Activated CD4-positive, alpha-beta T cell treated with anti-CD3 and anti-CD28 coated beads, Interleukin-2, amount 10 ng/mL, durations not matched to agents 24 days and 14 days (primary cell): ENCODE measurements at regions of chr16 and their contacts with region 1.

Region 1: DNA sequence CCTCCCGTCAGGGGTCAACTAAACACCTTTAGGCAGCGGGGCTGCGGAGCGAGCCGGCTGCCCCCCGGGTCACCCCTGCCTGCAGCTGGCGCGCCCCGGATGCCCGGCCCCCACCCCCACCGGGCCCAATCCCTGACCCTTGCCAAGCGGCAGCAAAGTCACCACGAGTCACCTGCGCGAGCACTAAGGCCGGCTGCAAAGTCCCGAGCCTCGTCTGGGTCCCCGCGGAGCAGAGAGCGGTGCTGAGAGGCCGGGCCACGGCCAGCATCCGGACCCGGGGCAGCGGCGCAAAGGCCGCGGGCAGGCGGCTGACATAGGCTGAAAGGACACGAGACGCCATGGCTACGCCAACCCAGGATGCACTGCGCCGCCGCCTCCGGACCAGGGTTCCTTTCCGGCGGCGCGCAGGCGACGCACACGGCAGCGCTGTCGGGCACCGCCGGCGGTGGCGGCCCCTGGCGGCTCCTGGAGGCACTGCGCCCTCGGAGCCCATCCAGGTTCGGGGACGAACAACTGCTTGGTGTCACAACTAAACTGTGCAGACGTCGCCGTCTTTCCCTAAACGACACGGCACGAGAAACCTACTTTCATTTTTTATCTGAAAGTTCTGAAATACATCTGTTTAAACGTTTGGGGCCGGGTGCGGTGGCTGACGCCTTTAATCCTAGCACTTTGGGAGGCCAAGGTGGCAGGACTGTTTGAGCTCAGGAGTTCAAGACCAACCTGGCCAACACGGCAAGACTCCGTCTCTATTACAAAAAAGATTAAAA is at the start of gene NDUFAB1:
- DNase-seq: peak; percentile 98
- H3K4me3 Mint-ChIP-seq: peak within 1 kb of the TSS; percentile 88
- H3K27ac Mint-ChIP-seq: peak within 1 kb of the TSS; percentile 83
- H3K4me1 Mint-ChIP-seq: peaks cover 14% of the 10 kb centered on the region
- H3K27me3 Mint-ChIP-seq: no peaks in the 10 kb centered on the region
- total RNA-seq, gene NDUFAB1: 161 and 163 TPM in 2 replicates

Region 2: GRCh38 chr16:23452572-23453337 is 143.4 kb before region 1 on chr16 and contains the start of gene COG7:
- intact Hi-C with region 1: loop called (anchors 5 kb)
- DNase-seq: peak; percentile 96
- H3K4me3 Mint-ChIP-seq: peak within 1 kb of the TSS; percentile 98
- H3K27ac Mint-ChIP-seq: peak within 1 kb of the TSS; percentile 95
- H3K4me1 Mint-ChIP-seq: peaks cover 16% of the 10 kb centered on the region
- H3K27me3 Mint-ChIP-seq: no peaks in the 10 kb centered on the region
- total RNA-seq, gene COG7: 21.6 and 25.6 TPM in 2 replicates

Region 3: GRCh38 chr16:23510164-23510914 is 85.8 kb before region 1 on chr16 and contains the start of gene GGA2:
- intact Hi-C with region 1: loop called (anchors 5 kb)
- DNase-seq: peak; percentile 94
- H3K4me3 Mint-ChIP-seq: peak within 1 kb of the TSS; percentile 91
- H3K27ac Mint-ChIP-seq: peak within 1 kb of the TSS; percentile 95
- H3K4me1 Mint-ChIP-seq: peaks cover 51% of the 10 kb centered on the region
- H3K27me3 Mint-ChIP-seq: no peaks in the 10 kb centered on the region
- total RNA-seq, gene GGA2: 109 and 113 TPM in 2 replicates

Region 4: DNA sequence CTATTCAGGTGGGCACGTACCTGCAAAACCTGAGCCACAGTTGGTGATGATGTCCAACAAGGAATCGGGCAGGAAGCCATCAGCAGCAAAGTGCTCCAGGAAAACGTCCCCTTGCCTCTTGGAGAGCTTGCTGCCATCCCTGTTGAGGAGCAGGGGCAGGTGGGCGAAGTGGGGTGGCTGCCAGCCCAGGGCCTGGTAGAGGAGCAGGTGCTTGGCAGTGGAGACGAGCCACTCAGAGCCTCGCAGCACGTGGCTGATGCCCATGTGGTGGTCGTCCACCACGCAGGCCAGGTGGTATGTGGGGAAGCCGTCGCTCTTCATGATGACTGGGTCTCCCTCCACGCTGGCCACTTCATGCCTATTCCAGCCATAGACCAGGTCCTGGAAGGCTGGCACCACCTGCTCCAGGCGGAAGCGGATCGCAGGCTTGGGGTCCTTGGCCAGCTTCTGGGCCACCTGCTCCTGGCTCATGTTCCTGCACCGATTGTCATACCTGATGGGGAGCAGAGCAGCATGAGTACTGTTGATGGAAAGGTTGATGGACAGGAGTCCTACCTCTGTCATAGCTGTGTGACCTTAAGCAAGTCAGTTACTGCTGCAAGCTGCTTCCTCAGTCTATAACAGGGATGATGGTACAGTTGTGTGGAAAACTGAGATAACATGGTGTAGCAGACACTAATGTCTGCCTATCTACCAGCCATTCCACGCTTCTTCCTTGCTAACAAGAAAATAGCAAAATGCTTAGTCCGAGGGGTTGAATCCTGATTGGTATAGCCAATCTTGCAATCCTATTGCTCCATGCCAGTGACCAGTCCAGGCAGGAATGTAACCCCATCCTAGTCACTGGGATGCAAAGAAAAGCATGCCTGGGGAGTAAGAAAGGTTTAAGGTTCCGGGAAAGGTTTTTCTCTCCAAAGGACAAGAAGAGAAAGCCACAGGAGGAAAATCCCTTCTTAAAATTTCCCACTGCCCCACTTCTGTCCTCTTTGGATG is 61.0 kb before region 1 on chr16:
- intact Hi-C with region 1: no loop called
- DNase-seq: no peak
- H3K4me3 Mint-ChIP-seq: no peak overlapping the region
- H3K27ac Mint-ChIP-seq: no peak overlapping the region
- H3K4me1 Mint-ChIP-seq: no peaks in the 10 kb centered on the region
- H3K27me3 Mint-ChIP-seq: no peaks in the 10 kb centered on the region

Region 5: GRCh38 chr16:23640931-23641765 is 45.0 kb after region 1 on chr16 and contains the starts of genes DCTN5 and PALB2:
- intact Hi-C with region 1: loop called (anchors 1 kb)
- DNase-seq: peak; percentile 97
- H3K4me3 Mint-ChIP-seq: peak within 1 kb of the TSS; percentile 97
- H3K27ac Mint-ChIP-seq: peak within 1 kb of the TSS; percentile 93
- H3K4me1 Mint-ChIP-seq: peaks cover 32% of the 10 kb centered on the region
- H3K27me3 Mint-ChIP-seq: no peaks in the 10 kb centered on the region
- total RNA-seq, gene DCTN5: 98.3 and 99.4 TPM in 2 replicates
- total RNA-seq, gene PALB2: 31.2 and 35.7 TPM in 2 replicates